GM12878 (cell line): ENCODE measurements at regions of chr16 and their contacts with region 1.

Region 1: DNA sequence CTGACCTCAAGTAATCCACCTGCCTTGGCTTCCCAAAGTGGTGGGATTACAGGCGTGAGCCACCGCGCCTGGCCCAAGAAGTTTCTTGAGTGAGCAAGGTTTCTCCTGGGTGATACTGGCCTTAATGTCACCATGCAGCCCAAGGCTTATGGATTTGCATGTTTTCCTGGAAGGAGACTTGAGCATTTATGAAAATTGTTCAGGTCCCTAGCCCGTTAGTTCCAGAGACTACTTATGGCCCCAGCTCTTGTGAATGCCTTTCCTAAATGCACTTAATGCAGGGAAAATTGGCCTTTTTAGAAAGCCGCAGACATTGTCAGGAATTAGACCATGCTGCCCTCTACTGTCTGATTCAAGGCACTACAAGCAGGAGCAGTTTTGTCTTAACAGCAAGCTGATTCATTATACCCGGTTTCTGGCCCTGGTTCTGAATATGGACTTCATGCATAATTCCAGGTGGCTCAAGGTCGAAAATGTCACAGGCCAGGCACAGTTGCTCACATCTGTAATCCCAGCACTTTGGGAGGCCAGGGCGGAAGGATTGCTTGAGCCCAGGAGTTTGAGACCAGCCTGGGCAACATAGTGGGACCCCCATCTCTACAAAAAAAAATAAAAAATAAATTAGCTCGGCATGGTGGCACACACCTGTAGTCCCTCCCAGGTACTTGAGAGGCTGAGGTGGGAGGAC is 91.3 kb downstream of the SNX29 start:
- DNase-seq: no peak
- ATAC-seq: peak; percentile 89
- H3K4me3 ChIP-seq: no peak overlapping the region
- H3K27ac ChIP-seq: no peak overlapping the region
- H3K4me1 ChIP-seq: no peaks in the 10 kb centered on the region
- H3K27me3 ChIP-seq: no peaks in the 10 kb centered on the region
- CTCF ChIP-seq: peak; percentile 85 to 94 (median 92)
- EP300 ChIP-seq: no peak
- POLR2A ChIP-seq: no peak
- RAD21 ChIP-seq: peak; percentile 96

Region 2: GRCh38 chr16:11949527-11949926 is 118.3 kb before region 1 on chr16:
- CTCF ChIA-PET with region 1: interaction called, 85 read pairs
- POLR2A ChIA-PET with region 1: interaction called, 6 read pairs
- RAD21 ChIA-PET with region 1: interaction called, 68 read pairs
- SMC1A ChIA-PET with region 1: interaction called, 61 read pairs
- in situ Hi-C with region 1: loop called (anchors 5 kb)
- intact Hi-C with region 1: loop called (anchors 1 kb)
- DNase-seq: no peak
- ATAC-seq: peak; percentile 99
- H3K4me3 ChIP-seq: no peak overlapping the region
- H3K27ac ChIP-seq: no peak overlapping the region
- H3K4me1 ChIP-seq: peaks cover 9% of the 10 kb centered on the region
- H3K27me3 ChIP-seq: no peaks in the 10 kb centered on the region
- CTCF ChIP-seq: peak; percentile 73 to 82 (median 75)
- EP300 ChIP-seq: no peak
- POLR2A ChIP-seq: no peak
- RAD21 ChIP-seq: peak; percentile 97

Region 3: GRCh38 chr16:11964761-11965551 is 102.9 kb before region 1 on chr16 and contains the start of gene TNFRSF17:
- CTCF ChIA-PET with region 1: interaction called, 23 read pairs
- POLR2A ChIA-PET with region 1: no interaction called
- RAD21 ChIA-PET with region 1: interaction called, 20 read pairs
- SMC1A ChIA-PET with region 1: interaction called, 20 read pairs
- in situ Hi-C with region 1: no loop called
- intact Hi-C with region 1: no loop called
- DNase-seq: peak; percentile 94
- ATAC-seq: peak; percentile 70
- H3K4me3 ChIP-seq: peak within 1 kb of the TSS; percentile 78
- H3K27ac ChIP-seq: peak within 1 kb of the TSS; percentile 95
- H3K4me1 ChIP-seq: peaks cover 30% of the 10 kb centered on the region
- H3K27me3 ChIP-seq: no peaks in the 10 kb centered on the region
- CTCF ChIP-seq: no peak
- EP300 ChIP-seq: peak; percentile 86 to 95
- POLR2A ChIP-seq: peak; percentile 60
- RAD21 ChIP-seq: no peak; the same call in 1 of the 2 replicates
- polyA plus RNA-seq, gene TNFRSF17: 453 to 461 TPM

Region 4: DNA sequence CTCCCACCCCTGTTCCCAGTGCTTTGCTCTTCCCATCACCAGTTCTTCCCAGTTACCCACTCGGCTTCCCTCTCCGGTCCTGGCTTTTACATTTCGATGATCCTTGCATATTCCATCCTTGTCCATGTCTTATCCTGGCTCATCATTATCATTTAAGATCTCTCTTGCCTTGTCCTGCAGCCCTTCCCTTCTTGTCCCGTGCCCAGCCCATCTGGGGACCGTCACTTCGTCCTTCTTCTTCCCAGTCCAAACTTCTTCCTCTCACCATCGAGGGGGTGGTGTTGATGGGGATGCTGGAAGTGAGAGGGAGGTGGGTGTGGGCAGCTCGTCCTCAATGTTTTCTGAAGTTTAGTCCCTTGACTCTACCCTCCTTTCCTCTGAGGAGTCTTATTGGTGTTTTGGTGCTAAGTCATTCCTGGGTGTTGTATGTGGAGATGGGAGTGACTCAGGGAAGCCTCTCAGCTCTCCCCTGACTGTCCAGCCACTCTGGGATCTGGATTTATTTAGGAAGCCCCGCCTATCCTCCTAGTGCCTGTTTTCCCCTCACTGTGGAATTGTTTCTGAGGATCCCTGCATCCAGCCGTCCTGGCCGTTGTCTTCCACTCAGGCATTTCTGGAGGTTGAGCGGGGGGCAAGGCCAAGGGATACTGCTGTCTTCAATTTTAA is 90.3 kb before region 1 on chr16:
- CTCF ChIA-PET with region 1: interaction called, 16 read pairs
- POLR2A ChIA-PET with region 1: no interaction called
- RAD21 ChIA-PET with region 1: interaction called, 6 read pairs
- SMC1A ChIA-PET with region 1: interaction called, 9 read pairs
- in situ Hi-C with region 1: no loop called
- intact Hi-C with region 1: no loop called
- DNase-seq: no peak
- ATAC-seq: no peak
- H3K4me3 ChIP-seq: peak overlapping the region; percentile 96
- H3K27ac ChIP-seq: peak overlapping the region; percentile 88
- H3K4me1 ChIP-seq: peaks cover 14% of the 10 kb centered on the region
- H3K27me3 ChIP-seq: no peaks in the 10 kb centered on the region
- CTCF ChIP-seq: no peak
- EP300 ChIP-seq: no peak
- POLR2A ChIP-seq: no peak
- RAD21 ChIP-seq: no peak

Region 5: DNA sequence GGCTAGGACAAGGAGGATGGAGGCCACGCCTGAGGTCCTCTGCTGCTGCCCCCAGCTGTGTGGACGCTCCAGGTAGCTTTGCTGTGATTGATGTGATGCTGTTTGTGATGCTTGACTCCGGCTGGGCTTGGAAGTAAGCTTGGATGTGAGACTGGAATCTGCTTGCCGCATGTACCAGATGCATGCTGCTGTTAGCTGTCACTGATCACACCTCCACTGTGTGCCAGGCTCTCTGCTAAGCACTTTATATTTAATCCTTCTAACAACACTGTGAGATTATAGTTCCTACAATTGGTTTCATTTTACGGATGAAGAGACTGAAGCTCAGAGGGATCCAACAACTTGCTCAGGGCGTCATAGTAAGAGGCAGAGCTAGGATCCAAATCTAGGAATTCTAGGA is 67.8 kb before region 1 on chr16:
- CTCF ChIA-PET with region 1: interaction called, 17 read pairs
- POLR2A ChIA-PET with region 1: no interaction called
- RAD21 ChIA-PET with region 1: interaction called, 5 read pairs
- SMC1A ChIA-PET with region 1: interaction called, 4 read pairs
- in situ Hi-C with region 1: no loop called
- intact Hi-C with region 1: no loop called
- DNase-seq: no peak
- ATAC-seq: no peak
- H3K4me3 ChIP-seq: no peak overlapping the region
- H3K27ac ChIP-seq: no peak overlapping the region
- H3K4me1 ChIP-seq: no peaks in the 10 kb centered on the region; the same call in 1 of the 2 replicates
- H3K27me3 ChIP-seq: no peaks in the 10 kb centered on the region
- CTCF ChIP-seq: no peak
- EP300 ChIP-seq: no peak
- POLR2A ChIP-seq: no peak
- RAD21 ChIP-seq: no peak

Region 6: GRCh38 chr16:12086822-12087221 is 19.0 kb after region 1 on chr16:
- CTCF ChIA-PET with region 1: interaction called, 12 read pairs
- POLR2A ChIA-PET with region 1: no interaction called
- RAD21 ChIA-PET with region 1: no interaction called
- SMC1A ChIA-PET with region 1: no interaction called
- in situ Hi-C with region 1: no loop called
- intact Hi-C with region 1: no loop called
- DNase-seq: no peak
- ATAC-seq: no peak
- H3K4me3 ChIP-seq: no peak overlapping the region
- H3K27ac ChIP-seq: no peak overlapping the region
- H3K4me1 ChIP-seq: peaks cover 8% of the 10 kb centered on the region
- H3K27me3 ChIP-seq: no peaks in the 10 kb centered on the region
- CTCF ChIP-seq: no peak
- EP300 ChIP-seq: no peak
- POLR2A ChIP-seq: no peak
- RAD21 ChIP-seq: no peak

Region 7: DNA sequence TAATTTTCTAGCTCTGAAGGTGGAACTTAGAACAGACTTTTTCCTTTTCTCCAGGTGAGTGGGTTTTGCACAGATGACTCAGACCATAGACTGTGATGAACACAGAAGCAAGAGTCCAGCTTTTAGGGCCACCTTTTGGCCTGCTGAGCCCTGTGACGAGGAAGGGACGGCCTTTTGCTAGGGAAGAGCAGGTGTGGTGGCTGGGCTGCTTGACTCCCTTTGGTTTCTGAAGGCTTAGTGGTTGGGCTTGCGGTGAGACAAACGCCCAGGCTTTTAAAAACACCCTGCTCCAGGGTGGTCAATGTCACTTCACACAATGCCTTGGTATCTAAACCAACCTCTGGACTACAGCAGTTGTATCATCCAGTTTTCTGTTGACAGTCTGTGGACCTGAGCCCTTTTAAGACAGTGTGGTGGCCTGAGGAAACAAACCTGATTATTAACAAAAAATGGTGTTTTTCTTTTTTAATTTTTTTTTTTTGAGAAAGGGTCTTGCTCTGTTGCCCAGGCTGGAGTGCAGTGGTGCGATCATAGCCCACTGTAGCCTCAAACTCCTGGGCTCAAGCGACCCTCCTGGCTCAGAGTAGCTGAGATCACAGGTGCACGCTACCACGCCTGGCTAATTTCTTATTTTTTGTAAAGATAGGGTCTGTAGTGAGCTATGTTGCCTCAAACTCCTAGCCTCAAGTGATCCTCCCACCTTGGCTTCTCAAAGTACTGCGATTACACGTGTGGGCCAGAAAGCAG is 42.7 kb after region 1 on chr16:
- CTCF ChIA-PET with region 1: no interaction called
- POLR2A ChIA-PET with region 1: no interaction called
- RAD21 ChIA-PET with region 1: no interaction called
- SMC1A ChIA-PET with region 1: no interaction called
- in situ Hi-C with region 1: no loop called
- intact Hi-C with region 1: no loop called
- DNase-seq: no peak
- ATAC-seq: no peak
- H3K4me3 ChIP-seq: no peak overlapping the region
- H3K27ac ChIP-seq: no peak overlapping the region
- H3K4me1 ChIP-seq: no peaks in the 10 kb centered on the region
- H3K27me3 ChIP-seq: no peaks in the 10 kb centered on the region
- CTCF ChIP-seq: no peak
- EP300 ChIP-seq: no peak
- POLR2A ChIP-seq: no peak
- RAD21 ChIP-seq: no peak

Region 8: DNA sequence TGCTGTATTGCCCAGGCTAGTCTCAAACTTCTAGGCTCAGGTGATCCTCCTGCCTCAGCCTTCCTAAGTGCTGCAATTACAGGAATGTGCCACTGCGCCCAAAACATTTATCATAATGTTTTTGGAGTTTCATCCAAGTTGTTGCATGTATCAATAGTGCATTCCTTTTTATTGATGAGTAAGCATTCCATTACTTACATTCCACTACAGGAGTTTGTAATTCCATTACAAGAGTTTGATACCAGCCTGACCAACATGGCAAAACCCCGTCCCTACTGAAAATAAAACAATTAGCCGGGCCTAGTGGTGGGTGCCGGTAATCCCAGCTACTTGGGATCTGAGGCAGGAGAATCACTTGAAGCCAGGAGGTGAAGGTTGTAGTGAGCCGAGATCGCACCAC is 125.2 kb after region 1 on chr16:
- CTCF ChIA-PET with region 1: no interaction called
- POLR2A ChIA-PET with region 1: no interaction called
- RAD21 ChIA-PET with region 1: no interaction called
- SMC1A ChIA-PET with region 1: no interaction called
- in situ Hi-C with region 1: no loop called
- intact Hi-C with region 1: no loop called
- DNase-seq: no peak
- ATAC-seq: no peak
- H3K4me3 ChIP-seq: no peak overlapping the region
- H3K27ac ChIP-seq: no peak overlapping the region
- H3K4me1 ChIP-seq: no peaks in the 10 kb centered on the region
- H3K27me3 ChIP-seq: no peaks in the 10 kb centered on the region
- CTCF ChIP-seq: no peak
- EP300 ChIP-seq: no peak
- POLR2A ChIP-seq: no peak
- RAD21 ChIP-seq: no peak